Tibial artery (tissue), 4 donors: ENCODE measurements at regions of chr4 and their contacts with region 1.

Region 1: DNA sequence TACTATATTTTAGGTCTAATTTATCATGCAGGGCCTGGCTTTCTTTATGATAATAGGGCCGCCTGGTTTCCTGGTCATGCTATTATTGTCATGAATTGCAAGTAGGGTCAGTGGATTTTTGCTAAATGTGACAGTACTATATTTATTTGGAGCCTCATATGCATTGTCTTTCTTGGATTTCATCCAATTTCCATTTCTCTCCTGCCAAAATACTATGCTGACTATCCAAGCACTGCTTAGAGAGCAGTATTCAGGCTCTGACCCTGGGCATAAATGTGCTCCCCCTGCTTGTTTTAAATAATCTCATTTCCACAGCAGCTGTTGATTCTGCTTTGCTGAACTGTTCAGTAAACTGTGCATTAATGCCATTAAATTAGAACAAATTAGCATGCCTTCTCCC is 269.3 kb downstream of the GPM6A start:
- DNase-seq: no peak
- H3K4me3 ChIP-seq: no peak overlapping the region
- H3K27ac ChIP-seq: no peak overlapping the region
- H3K4me1 ChIP-seq: peaks cover 0 to 11% (median 5%) of the 10 kb centered on the region in 4 donors
- H3K27me3 ChIP-seq: no peaks in the 10 kb centered on the region
- CTCF ChIP-seq: no peak

Region 2: DNA sequence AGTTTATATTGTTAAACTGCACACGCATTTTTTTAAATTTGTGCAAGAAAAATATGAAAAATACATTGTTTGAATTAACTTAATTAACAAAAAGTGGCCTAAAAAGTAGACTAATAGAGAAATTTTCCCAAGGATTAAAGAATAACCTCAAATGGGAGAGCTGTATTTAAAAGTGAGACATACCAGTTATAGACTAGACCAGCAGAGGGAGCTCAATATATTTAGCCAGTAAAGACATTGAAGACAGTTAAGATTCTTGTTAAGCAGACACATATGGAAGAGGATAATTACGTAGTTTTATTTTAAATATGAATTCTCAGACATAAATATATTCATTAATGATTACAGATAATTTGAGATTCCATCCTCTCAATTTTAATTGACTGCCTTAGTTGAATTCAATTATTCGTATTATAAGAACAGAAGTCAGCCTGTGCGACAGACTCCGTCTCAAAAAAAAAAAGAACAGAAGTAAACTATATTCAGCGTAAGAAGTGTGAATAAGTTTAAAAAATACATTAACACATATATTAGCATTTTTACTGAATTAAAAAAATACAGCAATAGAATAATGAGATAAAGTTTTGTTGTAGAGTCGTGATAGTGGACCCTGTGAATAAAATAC is 778.6 kb before region 1 on chr4:
- intact Hi-C with region 1: loop called (anchors 10 kb)
- DNase-seq: no peak
- H3K4me3 ChIP-seq: no peak overlapping the region
- H3K27ac ChIP-seq: no peak overlapping the region
- H3K4me1 ChIP-seq: no peaks in the 10 kb centered on the region
- H3K27me3 ChIP-seq: no peaks in the 10 kb centered on the region
- CTCF ChIP-seq: peak; percentile 50 to 53

Region 3: GRCh38 chr4:175282407-175282806 is 260.4 kb before region 1 on chr4:
- intact Hi-C with region 1: no loop called
- DNase-seq: no peak
- H3K4me3 ChIP-seq: no peak overlapping the region
- H3K27ac ChIP-seq: no peak overlapping the region
- H3K4me1 ChIP-seq: no peaks in the 10 kb centered on the region
- H3K27me3 ChIP-seq: no peaks in the 10 kb centered on the region
- CTCF ChIP-seq: no peak

Region 4: GRCh38 chr4:175671491-175671934 is 128.7 kb after region 1 on chr4:
- intact Hi-C with region 1: no loop called
- DNase-seq: no peak
- H3K4me3 ChIP-seq: no peak overlapping the region
- H3K27ac ChIP-seq: no peak overlapping the region
- H3K4me1 ChIP-seq: no peaks in the 10 kb centered on the region
- H3K27me3 ChIP-seq: no peaks in the 10 kb centered on the region
- CTCF ChIP-seq: no peak